Activated CD4-positive, alpha-beta memory T cell treated with anti-CD3 and anti-CD28 coated beads, Interleukin-2, amount 10 ng/mL, durations not matched to agents 7 days and 5 days (primary cell): ENCODE measurements at regions of chr1 and their contacts with region 1.

Region 1: DNA sequence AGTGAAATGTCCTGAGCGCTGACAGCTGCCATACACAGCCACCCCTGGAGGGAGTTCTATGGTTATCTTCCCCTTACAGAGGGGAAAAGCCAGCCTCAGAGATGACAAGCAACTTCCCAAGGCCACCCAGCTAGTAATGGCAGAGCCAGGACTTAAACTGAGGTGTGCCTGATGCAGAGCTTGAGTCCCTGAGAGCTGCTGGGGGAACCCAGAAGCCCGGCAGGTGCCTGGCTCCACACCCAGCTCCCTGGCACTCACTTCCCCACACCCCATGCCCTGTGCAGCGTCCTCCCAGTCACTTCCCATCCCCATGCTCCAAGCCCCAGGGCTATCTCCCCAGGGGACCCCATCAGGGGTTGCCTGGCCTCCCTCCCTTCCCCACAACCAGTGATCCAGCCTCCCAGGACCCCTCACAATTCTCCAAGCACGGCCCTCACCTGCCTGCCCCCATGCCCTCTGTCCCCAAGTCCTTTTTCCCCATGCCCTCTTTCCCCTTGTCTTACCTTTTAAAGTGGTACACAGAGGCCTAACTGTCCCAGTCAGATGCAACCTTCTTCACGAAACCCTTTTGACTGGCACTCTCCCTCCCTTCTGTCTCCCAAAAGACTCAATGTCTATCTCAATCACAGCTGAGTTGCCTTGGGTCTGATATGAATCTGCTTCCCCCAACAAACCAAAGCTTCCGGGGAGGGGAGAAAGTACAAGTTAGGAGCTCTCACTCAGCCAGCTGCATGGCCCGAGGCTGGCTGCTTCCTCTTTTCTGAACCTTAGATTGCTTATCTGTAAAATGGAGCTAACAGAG is 39.8 kb upstream of the LRP8 start:
- DNase-seq: peak; percentile 69
- H3K4me3 Mint-ChIP-seq: peak overlapping the region; percentile 72
- H3K27ac Mint-ChIP-seq: peak overlapping the region; percentile 75
- H3K4me1 Mint-ChIP-seq: peaks cover 20% of the 10 kb centered on the region
- H3K27me3 Mint-ChIP-seq: no peaks in the 10 kb centered on the region

Region 2: GRCh38 chr1:53413175-53414001 is 45.7 kb after region 1 on chr1:
- CTCF ChIA-PET with region 1: no interaction called
- POLR2A ChIA-PET with region 1: interaction called, 10 read pairs
- DNase-seq: peak; percentile 78
- H3K4me3 Mint-ChIP-seq: peak overlapping the region; percentile 21
- H3K27ac Mint-ChIP-seq: peak overlapping the region; percentile 99
- H3K4me1 Mint-ChIP-seq: peaks cover 54% of the 10 kb centered on the region
- H3K27me3 Mint-ChIP-seq: no peaks in the 10 kb centered on the region